Activated CD4-positive, alpha-beta T cell treated with anti-CD3 and anti-CD28 coated beads, Interleukin-2, amount 10 ng/mL, durations not matched to agents 24 days and 14 days (primary cell): ENCODE measurements at regions of chr7 and their contacts with region 1.

Region 1: DNA sequence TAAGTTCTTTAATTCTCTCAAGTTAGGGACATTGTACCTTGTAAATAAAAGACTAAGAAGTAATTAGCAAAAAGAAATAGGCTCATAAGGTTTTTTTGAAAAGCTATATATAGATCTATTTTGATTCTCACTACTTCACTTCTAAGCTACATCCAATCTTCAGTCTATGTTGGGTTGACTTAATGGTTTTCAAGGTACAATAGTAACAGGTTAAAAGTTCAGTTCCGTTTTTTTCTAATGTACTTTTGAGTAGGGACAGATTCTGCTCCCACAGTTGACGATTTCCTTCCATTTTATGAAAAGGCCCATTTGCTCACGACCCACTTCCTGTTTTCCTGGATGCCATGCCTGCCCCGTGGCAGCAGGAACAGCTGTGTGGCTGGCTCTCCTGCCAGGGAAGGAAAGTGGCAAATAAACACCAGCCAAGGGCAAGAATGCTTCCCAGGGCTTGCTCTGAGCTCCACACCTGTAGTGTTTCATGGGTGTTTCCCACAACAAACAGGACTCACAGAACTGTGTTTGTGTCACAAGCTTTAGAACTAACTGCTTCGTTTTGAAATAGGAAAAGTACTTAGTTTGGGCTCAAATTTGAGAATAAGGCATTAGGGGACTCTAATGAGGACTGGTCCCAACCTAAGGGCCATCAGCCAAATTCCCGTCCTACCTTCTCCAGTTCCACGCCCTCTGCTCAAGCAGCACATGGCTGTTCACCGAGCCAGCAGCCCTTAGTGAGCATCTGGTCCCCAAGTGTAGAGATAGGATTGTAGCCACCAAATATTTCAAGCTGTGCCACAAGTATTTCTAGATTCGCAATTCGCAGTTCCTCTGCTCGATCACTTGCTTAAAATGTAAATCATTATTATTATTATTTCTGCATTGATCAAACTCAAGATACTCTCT is 240.7 kb downstream of the COBL start:
- DNase-seq: peak; percentile 45
- H3K4me3 Mint-ChIP-seq: no peak overlapping the region
- H3K27ac Mint-ChIP-seq: no peak overlapping the region
- H3K4me1 Mint-ChIP-seq: peaks cover 3% of the 10 kb centered on the region
- H3K27me3 Mint-ChIP-seq: peaks cover 3% of the 10 kb centered on the region

Region 2: GRCh38 chr7:50552921-50553320 is 523.0 kb before region 1 on chr7:
- intact Hi-C with region 1: no loop called
- DNase-seq: no peak
- H3K4me3 Mint-ChIP-seq: no peak overlapping the region
- H3K27ac Mint-ChIP-seq: no peak overlapping the region
- H3K4me1 Mint-ChIP-seq: no peaks in the 10 kb centered on the region
- H3K27me3 Mint-ChIP-seq: peaks cover 21% of the 10 kb centered on the region

Region 3: GRCh38 chr7:50733555-50733954 is 342.4 kb before region 1 on chr7:
- intact Hi-C with region 1: no loop called
- DNase-seq: no peak
- H3K4me3 Mint-ChIP-seq: no peak overlapping the region
- H3K27ac Mint-ChIP-seq: no peak overlapping the region
- H3K4me1 Mint-ChIP-seq: peaks cover 5% of the 10 kb centered on the region
- H3K27me3 Mint-ChIP-seq: no peaks in the 10 kb centered on the region

Region 4: DNA sequence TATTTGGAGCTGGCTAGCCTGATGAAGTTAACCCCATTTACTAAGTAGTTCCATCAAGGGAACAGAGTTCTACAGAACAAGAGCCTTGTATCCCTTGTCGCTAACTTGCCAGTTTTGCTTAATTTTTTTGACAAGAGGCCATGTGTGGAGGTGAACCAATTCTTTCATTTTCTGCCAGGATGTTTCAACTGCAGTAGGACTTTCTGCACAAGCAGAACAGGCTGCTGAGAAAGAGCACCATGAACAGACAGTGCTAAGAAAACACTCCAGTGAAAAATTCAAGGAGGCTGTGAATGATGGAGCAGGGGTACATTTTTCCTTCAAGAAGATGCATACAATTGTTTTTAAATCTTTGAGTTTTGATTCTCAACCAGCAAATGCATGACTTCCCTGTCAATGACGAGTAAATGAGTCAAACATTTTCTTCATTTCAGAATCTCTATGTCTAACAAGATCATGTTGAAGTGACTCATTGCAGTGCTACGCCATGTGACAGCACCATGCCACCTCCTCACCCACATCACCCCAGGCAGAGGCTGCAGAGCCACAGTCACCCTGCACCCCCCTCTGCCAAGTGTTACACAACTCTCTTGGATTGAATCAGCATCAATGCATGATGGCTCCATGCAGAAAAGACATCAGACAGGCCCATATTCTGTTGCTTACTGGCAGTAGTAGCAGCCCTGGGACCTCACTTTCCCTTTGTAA is 47.5 kb after region 1 on chr7:
- intact Hi-C with region 1: loop called (anchors 5 kb)
- DNase-seq: peak; percentile 81
- H3K4me3 Mint-ChIP-seq: no peak overlapping the region
- H3K27ac Mint-ChIP-seq: peak overlapping the region; percentile 78
- H3K4me1 Mint-ChIP-seq: peaks cover 27% of the 10 kb centered on the region
- H3K27me3 Mint-ChIP-seq: no peaks in the 10 kb centered on the region